Activated B cell treated with CpG ODN at 0.5 μM for 24 hours (primary cell): ENCODE measurements at regions of chr18 and their contacts with region 1.

Region 1: DNA sequence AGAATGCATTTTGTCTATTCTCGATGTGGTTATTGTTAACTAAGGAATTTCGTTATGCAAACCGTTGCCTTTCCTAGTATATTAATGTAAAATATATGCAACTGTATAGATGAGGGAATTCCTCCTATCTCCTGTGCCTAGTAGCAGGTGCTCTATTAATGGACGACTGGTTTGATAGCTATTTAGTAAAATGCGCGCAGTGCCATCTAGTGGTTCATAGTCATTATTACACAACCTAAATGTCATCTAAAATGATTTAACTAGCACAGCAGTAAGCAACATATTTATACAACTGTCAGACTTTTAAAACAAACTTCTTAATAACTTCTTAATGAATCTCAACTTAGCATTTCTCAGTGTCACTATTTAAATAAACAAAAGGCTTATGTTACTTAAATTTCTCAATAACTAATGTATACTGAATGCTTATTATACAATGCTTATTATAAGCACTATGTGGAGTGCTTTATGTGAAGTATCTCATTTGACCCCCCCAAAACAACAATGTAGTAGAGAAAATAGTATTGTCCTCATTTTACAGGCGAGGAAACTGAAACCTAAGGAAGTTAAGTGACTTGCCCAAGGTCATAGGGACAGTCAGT is 77.9 kb downstream of the DTNA start:
- DNase-seq: no peak
- ATAC-seq: peak; percentile 52
- H3K4me3 Mint-ChIP-seq: no peak overlapping the region
- H3K27ac Mint-ChIP-seq: no peak overlapping the region
- H3K4me1 Mint-ChIP-seq: no peaks in the 10 kb centered on the region
- H3K27me3 Mint-ChIP-seq: peaks cover 4% of the 10 kb centered on the region
- CTCF ChIP-seq: peak; percentile 63

Region 2: GRCh38 chr18:33231474-33232317 is 1556.3 kb before region 1 on chr18:
- CTCF ChIA-PET with region 1: no interaction called
- POLR2A ChIA-PET with region 1: no interaction called
- intact Hi-C with region 1: loop called (anchors 1 kb)
- DNase-seq: no peak
- ATAC-seq: peak; percentile 56
- H3K4me3 Mint-ChIP-seq: no peak overlapping the region
- H3K27ac Mint-ChIP-seq: no peak overlapping the region
- H3K4me1 Mint-ChIP-seq: no peaks in the 10 kb centered on the region
- H3K27me3 Mint-ChIP-seq: no peaks in the 10 kb centered on the region
- CTCF ChIP-seq: peak; percentile 98

Region 3: GRCh38 chr18:34122724-34123334 is 665.2 kb before region 1 on chr18:
- CTCF ChIA-PET with region 1: interaction called, 4 read pairs
- POLR2A ChIA-PET with region 1: no interaction called
- intact Hi-C with region 1: loop called (anchors 5 kb)
- DNase-seq: no peak
- ATAC-seq: no peak
- H3K4me3 Mint-ChIP-seq: no peak overlapping the region
- H3K27ac Mint-ChIP-seq: no peak overlapping the region
- H3K4me1 Mint-ChIP-seq: no peaks in the 10 kb centered on the region
- H3K27me3 Mint-ChIP-seq: no peaks in the 10 kb centered on the region
- CTCF ChIP-seq: peak; percentile 48

Region 4: GRCh38 chr18:34661464-34662111 is 126.4 kb before region 1 on chr18:
- CTCF ChIA-PET with region 1: interaction called, 15 read pairs
- POLR2A ChIA-PET with region 1: no interaction called
- intact Hi-C with region 1: loop called (anchors 1 kb)
- DNase-seq: no peak
- ATAC-seq: no peak
- H3K4me3 Mint-ChIP-seq: no peak overlapping the region
- H3K27ac Mint-ChIP-seq: no peak overlapping the region
- H3K4me1 Mint-ChIP-seq: no peaks in the 10 kb centered on the region
- H3K27me3 Mint-ChIP-seq: peaks cover 4% of the 10 kb centered on the region
- CTCF ChIP-seq: peak; percentile 53